Left colon (tissue), 2 donors: ENCODE measurements at regions of chr1 and their contacts with region 1.

Region 1: DNA sequence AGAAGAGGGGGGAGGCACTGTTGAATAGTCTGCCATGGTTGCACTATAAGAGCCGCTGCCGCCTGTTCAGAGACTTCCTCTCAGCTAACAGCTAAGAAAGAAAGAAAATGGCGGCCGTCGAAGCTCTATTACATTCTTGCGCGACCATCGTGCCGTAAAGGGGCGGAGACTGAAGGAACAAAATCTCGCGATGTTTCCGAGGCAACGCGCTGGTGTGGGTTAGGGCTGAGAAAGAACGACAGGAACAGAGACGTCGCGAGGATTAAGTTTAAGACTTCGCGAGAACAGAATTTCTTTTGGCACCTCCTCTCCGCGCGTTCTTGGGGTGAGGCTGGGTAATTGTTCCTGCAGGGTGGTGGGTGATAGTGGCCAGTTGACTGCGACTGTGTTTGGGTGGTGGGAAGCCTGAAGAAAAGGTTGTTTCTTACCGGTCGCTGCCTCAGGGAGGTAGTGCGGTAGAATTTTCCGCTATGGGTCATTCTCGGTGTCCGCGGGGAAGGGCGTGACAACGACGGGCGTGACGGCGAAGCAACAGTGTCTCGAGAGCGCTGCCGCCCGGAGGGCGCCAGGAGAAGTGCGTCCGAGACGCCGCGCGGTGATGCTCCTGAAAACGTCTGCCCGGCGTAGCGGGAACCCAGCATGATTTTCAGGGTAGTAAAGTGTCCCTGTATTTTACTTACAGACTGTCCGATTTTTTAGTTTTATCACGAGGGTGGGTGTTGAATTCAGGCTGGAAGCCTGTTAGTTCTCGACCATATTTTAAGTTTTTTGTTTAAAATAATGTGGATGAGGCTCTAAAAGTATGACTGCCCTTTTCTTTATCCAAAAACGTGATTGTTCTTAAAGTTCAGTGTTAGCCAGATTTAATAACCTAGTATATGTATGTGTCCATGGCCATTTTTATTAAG is at the start of gene FUBP1:
- DNase-seq: peak; percentile 95 to 96
- ATAC-seq: peak; percentile 84
- total RNA-seq, gene FUBP1: 78.0 to 94.7 TPM

Region 2: DNA sequence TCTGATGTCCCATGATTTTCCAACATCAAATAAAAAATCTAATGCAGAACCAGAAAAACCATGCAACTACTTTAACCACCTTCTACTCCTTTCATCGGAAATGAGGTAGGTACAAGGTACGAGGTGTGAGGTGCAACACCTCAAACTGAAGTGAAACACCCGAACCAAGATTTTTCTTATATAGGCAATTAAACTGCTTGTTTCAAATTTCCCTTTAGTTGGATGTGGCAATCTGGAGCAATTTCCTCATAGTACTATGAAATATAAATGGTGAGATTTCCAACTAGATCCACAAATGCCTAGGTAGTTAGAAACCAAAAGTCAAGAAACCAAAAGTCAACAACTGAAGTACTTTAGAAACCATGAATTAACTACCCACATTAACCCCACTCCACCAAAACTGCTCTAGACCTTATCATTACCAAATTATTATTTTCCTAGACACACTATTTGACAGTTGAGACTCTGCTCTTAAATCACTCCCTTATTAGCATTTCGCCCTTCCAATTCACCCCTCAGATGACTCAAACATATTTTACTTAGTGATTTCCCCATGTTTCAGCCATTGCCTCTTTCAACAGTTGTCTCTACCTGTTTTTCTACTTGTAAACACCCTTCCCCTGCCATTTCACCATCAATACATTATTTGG is 38.2 kb before region 1 on chr1:
- intact Hi-C with region 1: no loop called
- DNase-seq: no peak
- ATAC-seq: no peak

Region 3: GRCh38 chr1:78004719-78005447 is 25.7 kb after region 1 on chr1 and contains the start of gene DNAJB4:
- intact Hi-C with region 1: loop called in 1 of 2 experiments (anchors 2 kb)
- DNase-seq: peak; percentile 62 to 84
- ATAC-seq: peak; percentile 99
- total RNA-seq, gene DNAJB4: 10.5 to 15.9 TPM

Region 4: GRCh38 chr1:78114034-78114956 is 135.1 kb after region 1 on chr1:
- intact Hi-C with region 1: loop called in 1 of 2 experiments (anchors 10 kb)
- DNase-seq: peak in 1 of 2 donors; percentile 66
- ATAC-seq: peak; percentile 92

Region 5: DNA sequence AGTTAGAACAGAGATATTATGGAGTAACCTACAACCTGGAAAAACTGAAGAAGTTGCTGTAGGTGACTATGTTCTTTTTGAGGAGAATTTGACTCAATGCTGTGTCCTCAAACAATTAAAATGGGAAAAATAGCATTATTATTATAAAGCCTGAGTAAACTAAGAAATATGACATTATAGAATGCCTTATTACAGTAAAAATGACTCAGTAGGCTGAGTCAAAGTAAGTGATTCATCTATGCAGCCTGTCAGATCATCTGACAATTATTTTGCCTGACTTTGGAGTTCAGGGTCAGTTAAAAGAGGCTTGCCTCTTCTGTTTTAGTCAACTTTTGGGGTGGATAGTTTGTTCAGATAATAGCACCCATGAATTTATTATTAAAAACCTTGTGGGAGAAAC is 360.8 kb after region 1 on chr1:
- intact Hi-C with region 1: no loop called
- DNase-seq: no peak
- ATAC-seq: no peak